Dorsolateral prefrontal cortex (tissue), 120 donors: ENCODE measurements at regions of chr2 and their contacts with region 1.

Region 1: DNA sequence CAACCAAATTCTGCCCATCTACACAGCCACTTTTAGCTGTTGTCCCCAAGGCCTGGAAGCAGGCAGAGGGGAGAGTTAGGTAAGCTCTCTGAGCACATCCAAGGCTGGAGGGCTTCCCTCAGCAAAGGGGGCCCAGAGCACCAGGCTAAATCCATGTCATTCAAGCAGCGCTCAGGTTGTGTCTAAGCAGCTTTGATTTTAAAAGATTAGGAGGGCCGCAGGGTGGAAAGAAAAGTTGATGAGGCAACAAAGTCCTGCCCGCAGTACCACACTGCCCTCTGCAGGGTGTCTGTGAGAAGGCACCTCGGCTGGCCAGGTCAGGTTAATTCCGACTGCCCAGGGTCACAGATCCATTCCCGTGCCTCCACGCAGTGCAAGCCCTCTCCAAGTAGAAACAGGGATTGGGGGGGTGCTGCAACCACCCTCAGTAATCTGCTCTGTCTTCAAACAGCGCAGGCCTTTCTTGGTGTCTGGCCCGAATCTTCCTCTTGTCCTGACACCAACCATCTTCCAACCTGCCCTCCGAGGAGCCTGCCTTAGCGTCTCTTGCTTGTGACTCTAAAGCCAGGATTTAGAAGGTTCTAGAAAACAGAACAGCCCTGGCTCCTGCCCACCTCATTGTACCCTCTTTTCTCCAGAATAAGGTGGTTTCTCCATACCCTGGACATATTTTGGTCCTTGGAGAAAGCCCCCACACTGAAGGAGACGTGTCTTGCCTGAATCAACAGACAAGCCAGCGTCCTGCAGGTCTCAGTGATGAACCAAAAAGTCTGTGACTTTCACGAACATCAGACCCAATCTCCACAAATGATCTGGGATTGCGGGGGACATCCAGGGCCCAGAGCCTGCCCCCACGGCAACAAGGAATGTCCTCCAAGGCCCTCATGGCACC is 289.2 kb downstream of the TNS1 start:
- DNase-seq: peak; percentile 78 to 88 (median 84)
- H3K4me3 ChIP-seq: peak overlapping the region in 12 of 59 donors; percentile 3 to 45 (median 26)
- H3K27ac ChIP-seq: peak overlapping the region; percentile 68 to 98 (median 93)
- H3K27me3 ChIP-seq: no peaks in the 10 kb centered on the region
- CTCF ChIP-seq: peak; percentile 89 to 99 (median 97)

Region 2: DNA sequence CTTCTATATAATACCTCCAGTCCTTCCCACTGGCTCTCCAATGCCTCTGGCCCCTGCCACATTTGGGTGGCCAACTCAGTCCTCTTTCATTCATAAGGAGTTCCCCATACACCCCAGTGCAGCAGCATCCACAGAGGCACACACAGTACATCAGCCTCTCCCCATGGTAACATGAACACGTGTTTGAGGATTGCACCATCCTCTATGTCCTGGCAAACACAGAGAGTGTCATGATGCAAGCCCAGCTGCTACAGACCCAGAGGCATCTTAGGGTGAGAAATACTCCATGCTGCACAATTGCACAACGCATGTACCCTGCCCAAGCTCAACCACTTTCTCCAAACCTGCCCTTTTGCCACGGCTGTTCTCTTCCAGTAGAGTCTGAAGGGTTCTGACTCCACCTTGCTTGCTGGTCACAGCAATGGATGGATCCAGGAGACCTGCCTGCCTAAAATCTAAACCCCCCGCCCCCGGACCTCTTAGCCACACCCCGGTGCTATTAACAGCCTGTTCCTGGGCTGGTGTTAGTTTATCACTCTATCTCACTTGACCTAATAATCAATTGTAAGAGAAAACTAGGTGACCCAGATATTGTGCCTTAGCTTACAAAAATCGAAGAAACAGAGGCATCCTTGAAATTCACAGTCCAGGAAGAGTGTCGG is 1029.7 kb before region 1 on chr2:
- intact Hi-C with region 1: loop called (anchors 5 kb)
- DNase-seq: peak in 2 of 10 donors; percentile 64 to 65
- H3K4me3 ChIP-seq: no peak overlapping the region
- H3K27ac ChIP-seq: peak overlapping the region in 7 of 59 donors; percentile 0 to 59 (median 37)
- H3K27me3 ChIP-seq: no peaks in the 10 kb centered on the region
- CTCF ChIP-seq: no peak

Region 3: GRCh38 chr2:217166241-217166850 is 547.3 kb before region 1 on chr2:
- intact Hi-C with region 1: loop called (anchors 1 to 10 kb)
- DNase-seq: no peak
- H3K4me3 ChIP-seq: no peak overlapping the region
- H3K27ac ChIP-seq: no peak overlapping the region
- H3K27me3 ChIP-seq: peaks cover 0 to 6% (median 0%) of the 10 kb centered on the region in 45 donors
- CTCF ChIP-seq: peak; percentile 10 to 83 (median 61)

Region 4: GRCh38 chr2:217510771-217511291 is 202.8 kb before region 1 on chr2:
- intact Hi-C with region 1: loop called (anchors 2 to 5 kb)
- DNase-seq: peak in 8 of 10 donors; percentile 26 to 78 (median 50)
- H3K4me3 ChIP-seq: peak overlapping the region in 11 of 59 donors; percentile 0 to 46 (median 24)
- H3K27ac ChIP-seq: peak overlapping the region in 1 of 59 donors; percentile 11
- H3K27me3 ChIP-seq: no peaks in the 10 kb centered on the region
- CTCF ChIP-seq: peak; percentile 44 to 90 (median 78)

Region 5: GRCh38 chr2:217622205-217623060 is 91.2 kb before region 1 on chr2:
- intact Hi-C with region 1: loop called in 1 of 2 experiments (anchors 2 kb)
- DNase-seq: peak in 2 of 10 donors; percentile 19 to 46
- H3K4me3 ChIP-seq: peak overlapping the region in 4 of 59 donors; percentile 4 to 33 (median 18)
- H3K27ac ChIP-seq: peak overlapping the region in 42 of 59 donors; percentile 2 to 73 (median 42)
- H3K27me3 ChIP-seq: no peaks in the 10 kb centered on the region
- CTCF ChIP-seq: no peak

Region 6: GRCh38 chr2:217650716-217651360 is 62.8 kb before region 1 on chr2:
- intact Hi-C with region 1: loop called (anchors 2 to 5 kb)
- DNase-seq: peak in 3 of 10 donors; percentile 25 to 30 (median 28)
- H3K4me3 ChIP-seq: no peak overlapping the region
- H3K27ac ChIP-seq: no peak overlapping the region
- H3K27me3 ChIP-seq: no peaks in the 10 kb centered on the region
- CTCF ChIP-seq: peak in 55 of 56 donors; percentile 31 to 84 (median 73)

Region 7: DNA sequence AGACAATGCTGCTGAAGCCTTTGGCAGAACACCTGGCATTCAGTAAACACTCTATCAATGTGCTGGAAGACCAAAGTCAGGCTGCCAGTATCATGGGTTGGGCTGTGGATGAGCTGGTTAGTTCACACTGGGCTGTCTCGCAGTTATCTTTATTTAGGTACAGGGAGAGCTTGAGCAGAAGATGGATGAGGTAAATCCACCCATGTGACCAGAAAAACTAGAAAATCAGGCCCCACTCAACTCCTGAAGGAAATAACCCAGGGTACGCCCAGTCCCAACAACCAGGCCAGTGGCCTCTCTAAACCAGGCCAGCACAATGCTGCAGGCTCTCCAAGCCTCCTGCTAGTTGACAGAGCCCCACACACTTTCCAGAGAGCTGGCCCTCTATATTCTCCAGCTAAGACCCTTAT is 41.1 kb before region 1 on chr2:
- intact Hi-C with region 1: no loop called
- DNase-seq: no peak
- H3K4me3 ChIP-seq: no peak overlapping the region
- H3K27ac ChIP-seq: no peak overlapping the region
- H3K27me3 ChIP-seq: no peaks in the 10 kb centered on the region
- CTCF ChIP-seq: no peak

Region 8: GRCh38 chr2:217756375-217757107 is 42.9 kb after region 1 on chr2:
- intact Hi-C with region 1: loop called (anchors 1 to 2 kb)
- DNase-seq: peak; percentile 64 to 87 (median 82)
- H3K4me3 ChIP-seq: peak overlapping the region; percentile 20 to 70 (median 52)
- H3K27ac ChIP-seq: peak overlapping the region in 10 of 59 donors; percentile 10 to 73 (median 27)
- H3K27me3 ChIP-seq: no peaks in the 10 kb centered on the region
- CTCF ChIP-seq: peak; percentile 66 to 99 (median 96)